ENCODE measurements at regions of chr17 and their contacts with region 1.

Region 1: DNA sequence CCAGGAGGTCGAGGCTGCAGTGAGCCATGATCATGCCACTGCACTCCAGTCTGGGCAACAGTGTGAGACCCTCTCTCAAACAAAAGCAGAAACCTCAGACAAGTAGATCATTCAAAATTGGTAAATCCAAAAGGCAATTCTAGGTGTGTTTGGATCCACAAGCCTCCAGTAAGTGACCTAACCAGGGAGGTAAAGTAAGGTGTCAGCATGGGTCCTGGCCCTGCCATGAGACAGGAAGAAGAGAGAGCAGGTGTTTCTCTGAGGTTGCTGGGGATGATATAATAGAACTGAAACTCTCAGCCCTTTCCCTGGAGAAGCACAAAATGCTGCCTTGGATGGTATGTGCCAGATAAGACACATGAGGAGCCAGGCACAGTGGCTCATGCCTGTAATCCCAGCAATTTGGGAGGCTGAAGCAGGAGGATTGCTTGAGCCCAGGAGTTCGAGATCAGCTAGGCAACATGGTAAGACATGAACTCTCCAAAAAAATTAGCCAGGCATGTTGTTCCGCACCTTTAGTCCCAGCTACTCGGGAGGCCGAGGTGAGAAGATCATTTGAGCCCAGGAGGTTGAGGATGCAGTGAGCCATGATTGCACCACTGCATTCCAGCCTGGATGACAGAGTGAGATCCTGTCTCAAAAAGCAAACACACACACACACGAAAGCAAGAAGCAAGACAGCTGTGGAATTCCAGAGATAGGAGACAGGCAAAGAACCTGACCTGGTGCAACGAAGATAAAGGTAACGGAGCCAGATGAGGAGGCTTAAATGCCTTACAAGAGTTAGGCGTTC is 6.5 kb downstream of the TM4SF5 start:
- DNase-seq: peak; percentile 83
- ATAC-seq: peak; percentile 86
- H3K4me3 ChIP-seq: 0 out of 6 replicates have a peak overlapping the region, but pooled peaks of 1 of the 3 experiments have one; percentile 7
- H3K27ac ChIP-seq: peak overlapping the region; percentile 74
- H3K4me1 ChIP-seq: peaks cover 65% of the 10 kb centered on the region
- H3K27me3 ChIP-seq: no peaks in the 10 kb centered on the region
- CTCF ChIP-seq: no peak
- EP300 ChIP-seq: peak; percentile 66 to 67
- POLR2A ChIP-seq: no peak; a peak in 1 of 4 replicates
- RAD21 ChIP-seq: no peak

Region 2: GRCh38 chr17:4721203-4722135 is 56.7 kb before region 1 on chr17:
- CTCF ChIA-PET with region 1: no interaction called
- POLR2A ChIA-PET with region 1: interaction called, 16 read pairs
- in situ Hi-C with region 1: no loop called
- intact Hi-C with region 1: no loop called
- DNase-seq: peak; percentile 95
- ATAC-seq: peak; percentile 90
- H3K4me3 ChIP-seq: peak overlapping the region in 1 of 3 experiments; percentile 58; a peak in 3 of 6 replicates
- H3K27ac ChIP-seq: peak overlapping the region; percentile 68
- H3K4me1 ChIP-seq: peaks cover 35% of the 10 kb centered on the region
- H3K27me3 ChIP-seq: no peaks in the 10 kb centered on the region
- CTCF ChIP-seq: no peak
- EP300 ChIP-seq: peak in 1 of 2 experiments; percentile 85; a peak in 2 of 4 replicates
- POLR2A ChIP-seq: peak; percentile 50 to 69; a peak in 3 of 4 replicates
- RAD21 ChIP-seq: 0 out of 2 replicates have a peak, but pooled peaks have one; percentile 12

Region 3: DNA sequence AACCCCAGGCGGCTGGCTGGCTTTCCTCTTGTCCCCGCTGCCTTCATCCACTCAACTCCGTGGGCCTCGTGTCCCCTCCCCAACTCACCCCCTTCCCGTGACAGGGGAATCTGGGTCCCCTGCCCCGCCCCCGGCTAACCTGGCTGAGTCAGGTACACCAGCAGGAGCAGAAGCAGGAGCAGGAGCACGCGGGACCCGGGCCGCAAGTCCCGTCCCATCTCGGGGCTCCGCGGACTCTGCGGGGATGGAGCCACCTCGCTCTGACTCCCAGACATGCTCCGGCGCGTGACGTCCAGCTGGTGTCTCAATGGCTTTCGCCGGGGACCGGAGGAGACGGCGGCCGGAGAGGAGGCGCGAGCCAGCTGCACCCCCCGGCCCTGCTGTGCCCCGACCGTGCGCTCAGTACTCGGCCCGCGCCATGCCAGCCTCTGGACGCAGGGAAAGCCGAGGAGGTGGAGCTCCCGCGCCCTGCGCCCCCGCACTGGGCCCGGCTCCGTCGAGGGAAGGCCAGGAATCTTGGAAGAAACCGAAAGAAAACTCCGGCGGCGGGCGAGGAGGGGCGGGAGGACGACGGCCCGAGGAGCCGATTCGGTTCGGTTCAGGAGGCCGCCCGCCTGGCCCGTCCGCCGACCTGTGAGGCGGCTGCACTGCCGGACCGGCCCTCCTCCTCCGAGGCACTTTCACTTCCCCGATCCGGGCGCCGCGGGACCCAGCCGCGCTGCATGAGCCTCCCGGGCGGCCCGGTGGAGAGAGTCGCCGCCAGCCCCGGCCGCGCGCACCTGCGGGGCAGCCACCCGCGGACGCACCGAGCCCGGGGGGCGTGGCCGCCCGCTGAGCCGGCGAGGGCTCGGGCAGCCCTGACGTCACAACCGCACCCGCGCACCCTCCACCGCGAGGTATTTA is 38.8 kb before region 1 on chr17 and contains the starts of genes CXCL16 and ZMYND15:
- CTCF ChIA-PET with region 1: no interaction called
- POLR2A ChIA-PET with region 1: interaction called, 15 read pairs
- in situ Hi-C with region 1: loop called (anchors 10 kb)
- intact Hi-C with region 1: loop called (anchors 5 kb)
- DNase-seq: no peak
- ATAC-seq: peak; percentile 57
- H3K4me3 ChIP-seq: peak within 1 kb of the TSS; percentile 75 to 88 (median 78)
- H3K27ac ChIP-seq: no peak within 1 kb of the TSS
- H3K4me1 ChIP-seq: peaks cover 74% of the 10 kb centered on the region
- H3K27me3 ChIP-seq: peaks cover 2 to 24% of the 10 kb centered on the region in 2 experiments; a peak in 3 of 5 replicates
- CTCF ChIP-seq: peak; percentile 29
- EP300 ChIP-seq: no peak
- POLR2A ChIP-seq: peak in 1 of 2 experiments; percentile 47; a peak in 1 of 4 replicates
- RAD21 ChIP-seq: no peak; the same call in 1 of the 2 replicates
- total RNA-seq, gene CXCL16: 5.4 and 9.4 TPM in 2 replicates
- total RNA-seq, gene ZMYND15: 0.15 and 0.24 TPM in 2 replicates

Region 4: GRCh38 chr17:4759776-4760236 is 18.4 kb before region 1 on chr17:
- CTCF ChIA-PET with region 1: no interaction called
- POLR2A ChIA-PET with region 1: interaction called, 14 read pairs
- in situ Hi-C with region 1: no loop called
- intact Hi-C with region 1: no loop called
- DNase-seq: peak; percentile 100
- ATAC-seq: peak; percentile 98
- H3K4me3 ChIP-seq: no peak overlapping the region
- H3K27ac ChIP-seq: peak overlapping the region; percentile 95
- H3K4me1 ChIP-seq: peaks cover 66% of the 10 kb centered on the region
- H3K27me3 ChIP-seq: no peaks in the 10 kb centered on the region
- CTCF ChIP-seq: no peak
- EP300 ChIP-seq: peak; percentile 91 to 93
- POLR2A ChIP-seq: no peak
- RAD21 ChIP-seq: no peak; the same call in 1 of the 2 replicates

Region 5: DNA sequence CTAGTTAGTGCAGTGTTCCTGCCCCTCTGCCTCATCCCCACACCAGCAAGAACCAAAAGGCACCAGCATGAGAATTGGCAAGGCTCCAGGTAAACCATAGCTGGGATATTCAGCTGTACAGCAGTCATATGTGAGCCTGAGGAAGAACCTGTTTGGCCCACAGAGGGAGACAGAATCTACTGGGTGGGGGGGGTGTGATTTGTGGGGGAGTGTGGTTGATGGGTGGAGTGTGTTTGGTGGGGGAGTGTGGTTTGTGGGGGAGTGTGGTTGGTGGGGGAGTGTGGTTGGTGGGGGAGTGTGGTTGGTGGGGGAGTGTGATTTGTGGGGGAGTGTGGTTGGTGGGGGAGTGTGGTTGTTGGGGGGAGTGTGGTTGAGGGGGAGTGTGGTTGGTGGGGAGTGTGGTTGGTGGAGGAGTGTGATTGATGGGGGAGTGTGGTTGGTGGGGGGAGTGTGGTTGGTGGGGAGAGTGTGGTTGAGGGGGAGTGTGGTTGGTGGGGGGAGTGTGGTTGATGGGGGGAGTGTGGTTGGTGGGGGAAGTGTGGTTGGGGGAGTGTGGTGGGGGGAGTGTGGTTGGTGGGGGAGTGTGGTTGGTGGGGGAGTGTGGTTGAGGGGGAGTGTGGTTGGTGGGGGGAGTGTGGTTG is 74.5 kb after region 1 on chr17:
- CTCF ChIA-PET with region 1: no interaction called
- POLR2A ChIA-PET with region 1: no interaction called
- in situ Hi-C with region 1: no loop called
- intact Hi-C with region 1: no loop called
- DNase-seq: peak; percentile 17
- ATAC-seq: no peak
- H3K4me3 ChIP-seq: no peak overlapping the region
- H3K27ac ChIP-seq: no peak overlapping the region
- H3K4me1 ChIP-seq: peaks cover 49% of the 10 kb centered on the region
- H3K27me3 ChIP-seq: no peaks in the 10 kb centered on the region
- CTCF ChIP-seq: no peak
- EP300 ChIP-seq: no peak
- POLR2A ChIP-seq: no peak
- RAD21 ChIP-seq: no peak